T-cell (primary cell): ENCODE measurements at regions of chr12 and their contacts with region 1.

Region 1: GRCh38 chr12:68611094-68611805 is 551 bp downstream of the RAP1B start:
- DNase-seq: peak in 34 of 35 experiments; percentile 18 to 66 (median 34)
- ATAC-seq: peak; percentile 15 to 50 (median 42)
- H3K4me3 ChIP-seq: peak overlapping the region; percentile 97 to 99
- H3K4me3 Mint-ChIP-seq: peak overlapping the region; percentile 94 to 100 (median 96)
- H3K27ac ChIP-seq: peak overlapping the region; percentile 92
- H3K27ac Mint-ChIP-seq: peak overlapping the region; percentile 95 to 97
- H3K4me1 ChIP-seq: peaks cover 19 to 27% of the 10 kb centered on the region in 2 experiments
- H3K4me1 Mint-ChIP-seq: peaks cover 43 to 58% (median 49%) of the 10 kb centered on the region in 3 donors
- H3K27me3 ChIP-seq: no peaks in the 10 kb centered on the region
- H3K27me3 Mint-ChIP-seq: no peaks in the 10 kb centered on the region

Region 2: GRCh38 chr12:68565375-68565903 is 45.8 kb before region 1 on chr12:
- CTCF ChIA-PET with region 1: no interaction called
- POLR2A ChIA-PET with region 1: interaction called in 1 of 2 experiments, 13 read pairs
- DNase-seq: peak in 1 of 35 experiments; percentile 19
- ATAC-seq: peak in 3 of 4 experiments; percentile 31 to 58 (median 55)
- H3K4me3 ChIP-seq: no peak overlapping the region
- H3K4me3 Mint-ChIP-seq: no peak overlapping the region
- H3K27ac ChIP-seq: no peak overlapping the region
- H3K27ac Mint-ChIP-seq: no peak overlapping the region
- H3K4me1 ChIP-seq: peaks cover 5 to 13% of the 10 kb centered on the region in 2 experiments
- H3K4me1 Mint-ChIP-seq: peaks cover 21 to 22% (median 22%) of the 10 kb centered on the region in 3 donors
- H3K27me3 ChIP-seq: no peaks in the 10 kb centered on the region
- H3K27me3 Mint-ChIP-seq: no peaks in the 10 kb centered on the region

Region 3: GRCh38 chr12:68587448-68587873 is 23.8 kb before region 1 on chr12:
- CTCF ChIA-PET with region 1: interaction called, 3 to 6 read pairs
- POLR2A ChIA-PET with region 1: interaction called, 4 to 11 read pairs
- DNase-seq: peak in 27 of 35 experiments; percentile 4 to 58 (median 29)
- ATAC-seq: peak; percentile 51 to 65 (median 58)
- H3K4me3 ChIP-seq: no peak overlapping the region
- H3K4me3 Mint-ChIP-seq: peak overlapping the region in 1 of 3 donors; percentile 43
- H3K27ac ChIP-seq: no peak overlapping the region
- H3K27ac Mint-ChIP-seq: peak overlapping the region; percentile 79 to 86
- H3K4me1 ChIP-seq: peaks cover 36 to 37% of the 10 kb centered on the region in 2 experiments
- H3K4me1 Mint-ChIP-seq: peaks cover 50 to 59% (median 54%) of the 10 kb centered on the region in 3 donors
- H3K27me3 ChIP-seq: peaks cover 0 to 5% of the 10 kb centered on the region in 2 experiments
- H3K27me3 Mint-ChIP-seq: no peaks in the 10 kb centered on the region

Region 4: DNA sequence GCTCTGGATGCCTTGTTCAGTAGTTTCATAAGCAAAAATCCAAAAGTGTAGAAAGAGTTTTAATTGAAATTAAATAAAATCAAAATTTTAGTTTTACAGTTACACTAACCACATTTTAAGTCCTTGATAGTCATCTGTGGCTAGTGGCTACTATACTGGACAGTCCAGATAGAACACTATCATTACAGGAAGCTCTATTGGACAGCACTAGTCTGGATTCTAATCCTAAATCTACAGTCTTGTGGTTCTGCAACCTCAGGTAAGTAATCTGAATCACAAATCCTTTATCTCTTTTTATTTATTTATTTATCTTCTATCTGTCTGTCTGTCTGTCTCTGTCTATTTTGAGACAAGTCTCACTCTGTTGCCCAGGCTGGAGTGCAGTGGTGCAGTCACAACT is 17.4 kb after region 1 on chr12:
- CTCF ChIA-PET with region 1: interaction called, 4 to 9 read pairs
- POLR2A ChIA-PET with region 1: interaction called, 8 to 11 read pairs
- DNase-seq: no peak
- ATAC-seq: no peak
- H3K4me3 ChIP-seq: no peak overlapping the region
- H3K4me3 Mint-ChIP-seq: peak overlapping the region; percentile 47 to 66 (median 59)
- H3K27ac ChIP-seq: no peak overlapping the region
- H3K27ac Mint-ChIP-seq: peak overlapping the region; percentile 70 to 72
- H3K4me1 ChIP-seq: peaks cover 29 to 44% of the 10 kb centered on the region in 2 experiments
- H3K4me1 Mint-ChIP-seq: peaks cover 79 to 87% (median 87%) of the 10 kb centered on the region in 3 donors
- H3K27me3 ChIP-seq: no peaks in the 10 kb centered on the region
- H3K27me3 Mint-ChIP-seq: no peaks in the 10 kb centered on the region

Region 5: GRCh38 chr12:69608114-69608513 is 996.9 kb after region 1 on chr12:
- CTCF ChIA-PET with region 1: no interaction called
- POLR2A ChIA-PET with region 1: no interaction called
- DNase-seq: no peak
- ATAC-seq: no peak
- H3K4me3 ChIP-seq: no peak overlapping the region
- H3K4me3 Mint-ChIP-seq: no peak overlapping the region
- H3K27ac ChIP-seq: no peak overlapping the region
- H3K27ac Mint-ChIP-seq: no peak overlapping the region
- H3K4me1 ChIP-seq: no peaks in the 10 kb centered on the region
- H3K4me1 Mint-ChIP-seq: peaks cover 0 to 11% (median 4%) of the 10 kb centered on the region in 3 donors
- H3K27me3 ChIP-seq: peaks cover 0 to 10% of the 10 kb centered on the region in 2 experiments
- H3K27me3 Mint-ChIP-seq: peaks cover 0 to 3% of the 10 kb centered on the region in 2 donors